Posterior vena cava (tissue), 2 donors: ENCODE measurements at regions of chr10 and their contacts with region 1.

Region 1: GRCh38 chr10:106189292-106189691 is 975.2 kb downstream of the SORCS1 start:
- DNase-seq: no peak

Region 2: DNA sequence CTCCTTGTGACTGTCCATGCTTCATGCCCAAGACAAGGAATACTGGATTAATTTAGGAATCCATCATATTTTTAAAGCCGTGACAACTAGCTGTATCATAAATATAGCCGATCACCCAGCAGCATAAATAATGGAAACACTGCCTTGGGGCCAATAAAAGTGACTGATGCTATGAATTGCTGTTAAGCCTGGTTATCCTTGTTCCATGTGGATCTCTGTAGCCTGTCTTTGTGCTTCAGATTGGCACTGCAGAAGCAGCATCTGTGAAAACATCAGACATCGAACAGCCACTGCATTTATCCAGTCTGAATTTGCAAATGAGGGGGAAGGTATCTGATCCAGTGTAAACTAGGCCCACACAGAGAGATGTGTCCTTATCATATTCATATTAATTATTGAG is 206.6 kb before region 1 on chr10:
- intact Hi-C with region 1: loop called in 1 of 2 experiments (anchors 5 kb)
- DNase-seq: no peak

Region 3: GRCh38 chr10:106402458-106402857 is 213.2 kb after region 1 on chr10:
- intact Hi-C with region 1: no loop called
- DNase-seq: no peak